ENCODE measurements at regions of chr15 and their contacts with region 1.

Region 1: DNA sequence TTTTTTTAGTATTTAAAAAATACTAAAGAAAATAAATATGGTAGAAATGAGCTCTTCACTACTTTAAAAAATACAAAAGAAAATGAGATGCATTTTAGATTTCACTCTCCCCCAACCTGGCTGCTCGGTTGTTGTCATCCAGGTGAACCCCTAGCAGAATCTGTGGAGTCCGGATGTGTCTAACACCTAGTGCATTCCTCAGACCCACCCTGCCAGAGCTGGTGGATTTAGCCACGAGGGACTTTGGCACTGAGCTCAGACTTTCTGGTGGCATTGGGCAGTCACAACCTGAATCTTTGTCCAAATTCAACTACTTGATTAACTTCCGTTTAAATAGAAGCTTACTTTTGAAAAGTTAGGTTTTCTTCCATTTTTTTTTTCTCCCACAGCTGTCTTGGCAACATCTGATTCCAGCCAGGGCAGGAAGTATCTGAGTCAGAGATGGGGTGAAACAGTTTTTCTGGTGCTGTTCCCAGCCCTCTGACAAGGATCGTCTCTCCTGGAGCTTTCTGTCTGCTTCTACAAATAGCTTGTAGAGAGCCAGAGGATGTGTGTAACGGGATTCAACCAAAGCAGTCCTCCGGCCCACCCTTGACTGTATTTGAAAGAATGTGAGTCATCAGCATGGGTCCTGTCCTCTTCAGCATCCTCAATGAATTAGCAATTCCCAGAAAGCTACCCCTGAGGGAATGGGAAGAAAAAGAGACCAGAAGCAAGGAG is 301.8 kb upstream of the MCTP2 start:
- DNase-seq: peak in 1 of 2 donors; percentile 70
- ATAC-seq: peak; percentile 88 to 99 (median 94)
- H3K4me3 ChIP-seq: no peak overlapping the region
- H3K27ac ChIP-seq: peak overlapping the region in 9 of 10 donors; percentile 6 to 78 (median 61)
- H3K4me1 ChIP-seq: peaks cover 0 to 6% (median 0%) of the 10 kb centered on the region in 9 donors
- H3K27me3 ChIP-seq: no peaks in the 10 kb centered on the region
- CTCF ChIP-seq: no peak

Region 2: GRCh38 chr15:93730724-93731123 is 198.8 kb before region 1 on chr15:
- intact Hi-C with region 1: loop called in 1 of 10 experiments (anchors 10 kb)
- DNase-seq: no peak
- ATAC-seq: no peak
- H3K4me3 ChIP-seq: no peak overlapping the region
- H3K27ac ChIP-seq: no peak overlapping the region
- H3K4me1 ChIP-seq: no peaks in the 10 kb centered on the region
- H3K27me3 ChIP-seq: no peaks in the 10 kb centered on the region
- CTCF ChIP-seq: no peak